ENCODE measurements at regions of chr10 and their contacts with region 1.

Region 1: GRCh38 chr10:839550-840205 is 91.8 kb downstream of the LARP4B start:
- DNase-seq: no peak
- CTCF ChIP-seq: no peak

Region 2: GRCh38 chr10:829241-829640 is 10.4 kb before region 1 on chr10:
- CTCF ChIA-PET with region 1: interaction called, 18 read pairs
- POLR2A ChIA-PET with region 1: no interaction called
- DNase-seq: no peak
- CTCF ChIP-seq: no peak